ENCODE measurements at regions of chr19 and their contacts with region 1.

Region 1: DNA sequence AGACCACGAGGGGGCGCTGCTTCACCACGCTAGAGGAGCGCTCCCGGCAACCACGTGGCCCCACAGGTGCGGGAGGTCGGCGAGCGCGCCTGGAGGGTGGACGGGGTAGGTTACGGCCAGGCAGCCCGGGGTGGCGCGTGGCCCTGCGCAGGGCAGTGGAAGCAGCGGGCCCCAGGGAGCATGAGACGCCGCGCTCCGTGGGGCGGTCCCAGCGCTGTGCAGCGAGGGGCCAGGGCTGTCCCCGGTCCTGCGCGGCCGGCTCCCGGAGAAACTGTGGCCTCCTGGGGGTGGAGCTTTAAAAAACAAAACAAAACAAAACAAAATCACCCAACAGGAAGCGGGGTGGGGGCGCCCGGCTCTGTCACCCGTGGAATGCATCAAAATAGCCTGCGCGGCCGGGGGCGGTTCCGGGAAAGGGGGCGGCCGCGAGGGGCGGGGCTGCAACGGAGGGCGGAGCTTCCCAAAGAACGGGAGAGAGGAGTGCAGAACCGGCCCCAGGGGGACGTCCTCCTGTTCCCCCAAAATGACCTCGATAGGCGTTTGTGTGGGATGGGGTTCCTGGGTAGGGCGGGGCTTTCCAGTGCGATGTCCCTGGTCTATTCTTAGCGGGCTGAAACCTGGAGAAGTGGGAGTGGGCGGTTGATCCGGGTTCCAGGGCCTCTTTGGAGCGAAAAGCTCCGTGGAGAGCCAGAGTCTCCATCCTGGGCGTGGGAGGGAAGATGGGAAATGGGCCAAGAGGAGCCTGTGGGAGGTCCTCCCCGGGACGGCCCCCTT is 27.3 kb downstream of the NUMBL start:
- DNase-seq: peak; percentile 95
- ATAC-seq: peak; percentile 85
- H3K4me3 Mint-ChIP-seq: peak overlapping the region; percentile 80
- H3K27ac Mint-ChIP-seq: no peak overlapping the region
- H3K4me1 Mint-ChIP-seq: peaks cover 2% of the 10 kb centered on the region; the same call in 1 of the 2 replicates
- H3K27me3 Mint-ChIP-seq: peaks cover 18% of the 10 kb centered on the region
- CTCF ChIP-seq: peak; percentile 97

Region 2: GRCh38 chr19:40561947-40562346 is 101.2 kb before region 1 on chr19:
- CTCF ChIA-PET with region 1: no interaction called
- POLR2A ChIA-PET with region 1: no interaction called
- DNase-seq: no peak
- ATAC-seq: no peak
- H3K4me3 Mint-ChIP-seq: no peak overlapping the region
- H3K27ac Mint-ChIP-seq: no peak overlapping the region
- H3K4me1 Mint-ChIP-seq: no peaks in the 10 kb centered on the region
- H3K27me3 Mint-ChIP-seq: peaks cover 81% of the 10 kb centered on the region
- CTCF ChIP-seq: no peak

Region 3: DNA sequence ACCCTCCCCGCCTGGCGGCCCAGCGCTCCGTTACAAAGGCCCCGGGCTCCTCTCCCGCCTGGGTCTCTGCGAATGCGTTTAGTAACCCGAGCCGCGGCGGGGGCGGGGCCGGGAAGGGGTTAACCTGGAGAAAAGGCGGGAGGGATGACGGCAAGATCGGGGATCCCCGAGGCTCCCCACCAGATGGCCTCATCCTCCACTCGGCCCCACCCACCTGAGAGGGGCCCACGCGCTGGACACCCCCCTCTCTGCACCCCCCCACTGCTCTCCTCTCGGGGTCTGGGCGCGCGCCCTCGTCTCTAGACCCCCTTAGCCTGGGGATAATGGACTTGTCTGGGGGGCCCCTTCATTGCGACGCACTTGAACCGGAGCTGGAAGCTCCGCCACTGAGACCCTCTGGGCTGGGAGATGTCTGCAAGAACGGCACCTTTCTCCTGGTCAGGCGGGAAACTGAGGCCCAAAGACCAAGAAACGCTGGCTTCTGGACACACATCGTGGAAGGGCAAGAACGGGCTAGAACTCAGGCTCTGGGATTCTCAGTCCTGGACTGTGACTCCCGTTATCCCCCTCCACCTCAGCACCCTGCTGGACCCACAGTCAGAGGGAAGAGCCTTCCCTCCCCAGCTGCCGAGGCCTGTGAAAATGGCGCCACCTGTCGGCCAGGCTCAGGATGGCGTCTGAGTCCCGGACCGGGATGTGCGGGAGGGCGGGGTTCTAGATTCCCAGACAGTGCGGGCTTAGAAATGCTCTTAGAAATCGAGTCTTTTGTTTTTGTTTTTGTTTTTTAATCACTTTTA is 64.8 kb before region 1 on chr19:
- CTCF ChIA-PET with region 1: no interaction called
- POLR2A ChIA-PET with region 1: no interaction called
- DNase-seq: peak; percentile 93
- ATAC-seq: peak; percentile 32
- H3K4me3 Mint-ChIP-seq: peak overlapping the region; percentile 76
- H3K27ac Mint-ChIP-seq: peak overlapping the region; percentile 82; the same call in 1 of the 2 replicates
- H3K4me1 Mint-ChIP-seq: peaks cover 44% of the 10 kb centered on the region
- H3K27me3 Mint-ChIP-seq: peaks cover 82% of the 10 kb centered on the region
- CTCF ChIP-seq: peak; percentile 99

Region 4: GRCh38 chr19:40690693-40691420 is 27.7 kb after region 1 on chr19:
- CTCF ChIA-PET with region 1: interaction called, 25 read pairs
- POLR2A ChIA-PET with region 1: interaction called, 8 read pairs
- DNase-seq: peak; percentile 91
- ATAC-seq: peak; percentile 83
- H3K4me3 Mint-ChIP-seq: peak overlapping the region; percentile 86
- H3K27ac Mint-ChIP-seq: peak overlapping the region; percentile 95
- H3K4me1 Mint-ChIP-seq: peaks cover 6% of the 10 kb centered on the region
- H3K27me3 Mint-ChIP-seq: no peaks in the 10 kb centered on the region
- CTCF ChIP-seq: no peak

Region 5: DNA sequence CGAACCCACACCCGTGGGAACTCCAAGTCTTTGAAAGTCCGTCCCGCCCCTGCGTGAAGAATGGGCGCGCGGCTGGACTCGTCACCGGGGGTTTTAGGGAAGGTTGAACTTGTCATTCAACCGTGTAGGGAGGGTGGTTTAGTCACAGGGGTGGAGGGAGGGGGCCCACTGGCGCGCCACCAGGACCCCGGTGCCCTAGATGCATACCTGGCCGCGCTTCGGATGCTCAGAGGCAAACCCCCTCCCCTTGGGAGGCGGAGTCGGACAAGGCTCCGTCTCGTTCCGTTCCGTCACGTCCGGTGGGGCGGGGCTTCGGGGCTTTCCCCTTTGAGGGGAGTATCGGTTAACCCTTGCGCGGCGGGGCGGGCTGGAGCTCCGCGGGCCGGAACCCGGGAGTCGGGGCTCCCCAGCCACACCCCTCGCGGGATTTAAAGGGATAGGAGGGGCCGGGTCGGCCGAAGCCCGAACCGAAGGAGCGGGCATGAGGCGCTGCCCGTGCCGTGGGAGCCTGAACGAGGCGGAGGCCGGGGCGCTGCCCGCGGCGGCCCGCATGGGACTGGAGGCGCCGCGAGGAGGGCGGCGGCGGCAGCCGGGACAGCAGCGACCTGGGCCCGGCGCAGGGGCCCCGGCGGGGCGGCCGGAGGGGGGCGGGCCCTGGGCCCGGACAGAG is 53.7 kb after region 1 on chr19 and contains the starts of genes COQ8B and ITPKC:
- CTCF ChIA-PET with region 1: interaction called, 10 read pairs
- POLR2A ChIA-PET with region 1: interaction called, 6 read pairs
- DNase-seq: peak; percentile 100
- ATAC-seq: peak; percentile 55
- H3K4me3 Mint-ChIP-seq: peak within 1 kb of the TSS; percentile 98
- H3K27ac Mint-ChIP-seq: peak within 1 kb of the TSS; percentile 99
- H3K4me1 Mint-ChIP-seq: peaks cover 33% of the 10 kb centered on the region
- H3K27me3 Mint-ChIP-seq: no peaks in the 10 kb centered on the region
- CTCF ChIP-seq: no peak
- total RNA-seq, gene COQ8B: 55.6 to 62.9 TPM (median 59.9 TPM) in 3 replicates
- total RNA-seq, gene ITPKC: 10.4 to 13.8 TPM (median 10.6 TPM) in 3 replicates

Region 6: DNA sequence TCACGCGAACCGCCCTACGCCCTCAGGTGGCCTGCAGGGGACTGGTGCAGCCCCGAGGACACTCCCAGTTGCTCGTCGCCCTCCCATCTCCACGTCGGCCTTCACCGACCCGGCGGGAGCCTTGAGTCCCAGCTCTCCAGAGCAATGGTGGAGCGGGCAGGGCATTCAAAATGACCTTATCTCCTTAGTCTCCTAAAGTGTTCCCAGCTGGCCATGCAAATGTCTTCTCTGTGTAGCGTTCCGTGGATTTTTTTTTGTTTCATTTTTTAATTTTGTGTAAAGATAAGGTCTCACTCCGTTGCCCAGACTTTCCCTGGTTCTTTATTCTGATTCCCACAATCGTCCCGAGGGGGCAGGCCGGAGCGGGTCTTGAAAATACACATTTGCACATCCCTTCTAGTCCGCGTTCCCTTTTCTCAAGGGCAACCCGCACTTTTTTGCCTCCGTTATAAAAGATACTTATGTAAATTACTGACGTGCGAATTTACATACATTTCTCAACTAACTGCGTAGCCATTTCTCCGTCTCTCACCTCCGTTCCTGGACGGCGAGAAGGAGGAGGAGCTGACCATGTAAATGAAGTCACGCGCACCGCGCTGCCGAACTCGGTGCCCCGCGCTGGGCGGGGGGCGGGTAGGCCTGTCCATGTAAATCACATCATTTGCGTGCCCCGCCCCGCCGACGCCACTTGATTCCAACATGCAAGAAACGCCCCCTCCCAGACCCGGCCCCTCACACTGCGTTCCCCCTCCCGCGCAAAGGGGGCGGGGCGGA is 135.3 kb after region 1 on chr19:
- CTCF ChIA-PET with region 1: interaction called, 13 read pairs
- POLR2A ChIA-PET with region 1: no interaction called
- DNase-seq: peak; percentile 100
- ATAC-seq: peak; percentile 80
- H3K4me3 Mint-ChIP-seq: peak overlapping the region; percentile 86
- H3K27ac Mint-ChIP-seq: peak overlapping the region; percentile 98
- H3K4me1 Mint-ChIP-seq: peaks cover 35% of the 10 kb centered on the region
- H3K27me3 Mint-ChIP-seq: no peaks in the 10 kb centered on the region
- CTCF ChIP-seq: no peak

Region 7: DNA sequence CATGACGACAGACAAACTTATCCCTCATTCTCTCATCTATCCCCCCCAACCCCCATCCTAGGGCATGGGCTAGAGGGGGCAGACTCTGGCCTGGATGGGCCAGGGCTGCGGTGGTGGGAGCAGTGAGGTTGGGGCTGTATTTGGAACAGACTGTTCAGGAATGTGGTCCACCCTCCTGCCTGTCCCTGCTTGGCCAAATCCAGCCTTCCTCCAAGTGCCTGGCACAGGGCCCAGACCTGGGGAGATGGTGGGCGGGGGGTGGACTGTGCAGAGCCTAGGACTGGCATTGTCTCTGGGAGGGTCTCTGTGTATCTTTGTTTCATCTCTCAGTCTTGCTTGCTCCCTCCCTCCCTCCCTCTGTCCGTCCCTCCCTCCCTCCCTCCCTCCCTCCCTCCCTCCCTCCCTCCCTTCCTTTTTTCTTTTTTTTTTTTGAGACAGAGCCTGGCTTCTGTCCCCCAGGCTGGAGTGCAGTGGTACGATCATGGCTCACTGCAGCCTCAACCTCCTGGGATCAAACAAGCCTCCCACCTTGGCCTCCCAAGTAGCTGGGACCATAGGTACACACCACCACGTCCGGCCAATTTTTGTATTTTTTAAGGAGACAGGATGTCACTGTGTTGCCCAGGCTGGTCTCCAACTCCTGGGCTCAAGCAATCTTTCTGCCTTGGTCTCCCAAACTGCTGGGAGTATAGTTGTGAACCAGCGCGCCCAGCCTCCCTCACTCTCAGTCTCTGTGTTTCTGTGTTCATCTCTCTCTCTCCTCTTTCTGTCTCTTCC is 150.3 kb after region 1 on chr19:
- CTCF ChIA-PET with region 1: interaction called, 25 read pairs
- POLR2A ChIA-PET with region 1: no interaction called
- DNase-seq: no peak
- ATAC-seq: no peak
- H3K4me3 Mint-ChIP-seq: peak overlapping the region; percentile 89
- H3K27ac Mint-ChIP-seq: peak overlapping the region; percentile 61; the same call in 1 of the 2 replicates
- H3K4me1 Mint-ChIP-seq: peaks cover 31% of the 10 kb centered on the region
- H3K27me3 Mint-ChIP-seq: peaks cover 51% of the 10 kb centered on the region
- CTCF ChIP-seq: no peak

Region 8: DNA sequence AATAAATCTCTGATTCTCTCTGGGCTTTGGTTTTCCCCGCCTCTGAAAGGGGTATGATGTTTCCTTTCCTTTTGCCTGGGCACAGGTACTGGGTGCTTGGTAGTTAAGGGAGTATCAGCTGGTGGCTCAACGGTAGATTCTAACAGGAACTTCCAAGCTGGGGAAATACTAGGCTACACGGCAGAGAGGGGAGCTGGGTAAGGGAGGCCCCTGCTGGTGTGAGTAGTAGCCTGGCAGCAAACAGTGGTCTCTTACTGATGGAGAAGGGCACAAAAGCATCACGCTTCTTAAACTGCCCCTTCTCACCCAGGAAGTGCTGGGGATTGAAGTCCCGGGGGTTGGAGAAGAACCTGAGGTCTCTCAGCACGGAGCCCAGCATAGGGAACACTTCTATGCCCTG is 245.9 kb after region 1 on chr19:
- CTCF ChIA-PET with region 1: no interaction called
- POLR2A ChIA-PET with region 1: no interaction called
- DNase-seq: no peak
- ATAC-seq: peak; percentile 62; the same call in 1 of the 2 replicates
- H3K4me3 Mint-ChIP-seq: peak overlapping the region; percentile 49
- H3K27ac Mint-ChIP-seq: no peak overlapping the region
- H3K4me1 Mint-ChIP-seq: peaks cover 10% of the 10 kb centered on the region
- H3K27me3 Mint-ChIP-seq: peaks cover 52% of the 10 kb centered on the region
- CTCF ChIP-seq: no peak

Measured in WTC11 (cell line).